T-cell (primary cell): ENCODE measurements at regions of chr4 and their contacts with region 1.

Region 1: GRCh38 chr4:187724456-187724855 is 271.1 kb upstream of the ZFP42 start:
- DNase-seq: no peak
- ATAC-seq: no peak
- H3K4me3 ChIP-seq: no peak overlapping the region
- H3K4me3 Mint-ChIP-seq: no peak overlapping the region
- H3K27ac ChIP-seq: no peak overlapping the region
- H3K27ac Mint-ChIP-seq: no peak overlapping the region
- H3K4me1 ChIP-seq: no peaks in the 10 kb centered on the region
- H3K4me1 Mint-ChIP-seq: no peaks in the 10 kb centered on the region
- H3K27me3 ChIP-seq: no peaks in the 10 kb centered on the region
- H3K27me3 Mint-ChIP-seq: no peaks in the 10 kb centered on the region

Region 2: DNA sequence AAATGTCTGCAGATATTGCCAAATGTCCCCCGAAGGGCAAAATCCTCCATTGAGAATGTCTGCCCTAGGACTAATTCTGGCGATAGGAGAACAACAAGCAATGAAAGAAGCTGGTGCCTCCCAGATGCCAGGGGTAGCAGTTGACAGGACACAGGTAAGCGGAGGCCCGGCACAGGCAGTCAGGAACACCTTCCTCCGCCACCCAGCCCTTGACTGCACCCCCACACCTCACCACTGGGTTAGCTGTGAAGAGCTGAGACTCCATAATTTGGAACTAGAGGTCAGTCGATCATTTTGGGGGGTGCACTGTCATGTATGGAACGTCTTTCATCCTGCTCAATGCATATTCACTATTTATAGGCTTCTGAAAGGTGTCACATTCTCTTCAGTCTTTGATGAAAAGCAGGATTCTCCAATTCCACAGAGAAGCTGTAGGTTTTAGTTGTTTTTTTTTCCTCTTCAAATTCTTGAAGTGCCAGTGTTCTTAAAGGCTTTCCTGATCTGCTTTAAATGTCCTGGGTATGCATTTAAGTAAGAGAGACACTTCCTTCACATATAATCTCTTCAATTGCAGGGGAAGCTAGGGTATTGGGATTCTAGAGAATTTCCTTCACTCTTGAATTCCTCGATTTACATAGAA is 159.5 kb after region 1 on chr4:
- CTCF ChIA-PET with region 1: interaction called in 1 of 2 experiments, 13 read pairs
- POLR2A ChIA-PET with region 1: no interaction called
- DNase-seq: no peak
- ATAC-seq: no peak
- H3K4me3 ChIP-seq: no peak overlapping the region
- H3K4me3 Mint-ChIP-seq: no peak overlapping the region
- H3K27ac ChIP-seq: no peak overlapping the region
- H3K27ac Mint-ChIP-seq: no peak overlapping the region
- H3K4me1 ChIP-seq: no peaks in the 10 kb centered on the region
- H3K4me1 Mint-ChIP-seq: no peaks in the 10 kb centered on the region
- H3K27me3 ChIP-seq: no peaks in the 10 kb centered on the region
- H3K27me3 Mint-ChIP-seq: no peaks in the 10 kb centered on the region